ENCODE measurements at regions of chr2 and their contacts with region 1.

Region 1: GRCh38 chr2:147006736-147007141 is 838.1 kb upstream of the ACVR2A start:
- DNase-seq: no peak
- ATAC-seq: peak; percentile 78
- H3K4me3 ChIP-seq: no peak overlapping the region
- H3K27ac ChIP-seq: peak overlapping the region; percentile 74; the same call in 1 of the 2 replicates
- H3K4me1 ChIP-seq: peaks cover 5% of the 10 kb centered on the region; the same call in 1 of the 2 replicates
- H3K27me3 ChIP-seq: no peaks in the 10 kb centered on the region
- CTCF ChIP-seq: no peak
- POLR2A ChIP-seq: no peak
- RAD21 ChIP-seq: no peak

Region 2: GRCh38 chr2:146939991-146940685 is 66.6 kb before region 1 on chr2:
- CTCF ChIA-PET with region 1: no interaction called
- POLR2A ChIA-PET with region 1: no interaction called
- dilution Hi-C with region 1: no loop called
- in situ Hi-C with region 1: no loop called
- intact Hi-C with region 1: loop called (anchors 2 kb)
- DNase-seq: no peak
- ATAC-seq: peak; percentile 74
- H3K4me3 ChIP-seq: no peak overlapping the region
- H3K27ac ChIP-seq: peak overlapping the region; percentile 97; the same call in 1 of the 2 replicates
- H3K4me1 ChIP-seq: no peaks in the 10 kb centered on the region; the same call in 1 of the 2 replicates
- H3K27me3 ChIP-seq: no peaks in the 10 kb centered on the region
- CTCF ChIP-seq: no peak
- POLR2A ChIP-seq: no peak
- RAD21 ChIP-seq: no peak

Measured in IMR-90 (cell line).